Right lobe of liver (tissue), 6 donors: ENCODE measurements at regions of chr2 and their contacts with region 1.

Region 1: DNA sequence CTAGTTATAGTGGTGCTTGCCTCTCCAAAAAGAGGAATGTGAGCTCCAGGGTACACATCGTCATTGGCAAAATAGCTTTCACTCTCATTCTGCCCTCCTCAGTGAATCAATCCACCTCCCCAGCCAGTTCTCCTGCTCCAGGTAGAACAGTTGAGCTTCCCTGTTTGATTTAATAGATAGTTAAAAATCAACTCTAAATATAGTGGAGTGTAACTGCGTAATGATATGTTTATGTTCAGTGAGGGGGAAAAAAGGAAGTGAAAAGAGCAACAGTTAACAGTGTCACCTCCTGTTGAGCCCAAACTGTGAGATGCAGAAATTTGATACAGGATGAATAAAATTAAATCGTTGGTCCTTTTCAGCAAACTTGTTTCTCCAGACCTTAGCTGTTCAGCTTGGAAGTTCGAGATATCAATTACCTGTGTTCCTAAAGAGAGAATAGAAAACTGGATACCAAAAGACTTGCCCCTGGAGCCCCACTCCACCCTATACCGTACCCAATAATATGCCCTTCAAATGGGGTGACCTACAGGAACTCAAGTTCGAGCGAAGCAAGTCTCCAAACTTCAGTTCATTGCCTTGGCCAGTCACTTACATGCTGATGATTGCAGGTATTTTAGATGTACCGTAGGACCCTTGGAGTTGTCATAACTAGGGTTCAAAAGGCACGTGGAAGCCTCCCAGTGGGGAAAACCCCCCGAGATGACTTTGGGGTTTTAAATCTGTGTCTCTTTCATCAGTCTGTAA is 708.4 kb downstream of the RNF144A start:
- DNase-seq: no peak
- ATAC-seq: no peak
- H3K4me3 ChIP-seq: no peak overlapping the region
- H3K27ac ChIP-seq: no peak overlapping the region
- H3K4me1 ChIP-seq: no peaks in the 10 kb centered on the region
- H3K27me3 ChIP-seq: no peaks in the 10 kb centered on the region
- CTCF ChIP-seq: no peak
- POLR2A ChIP-seq: no peak

Region 2: DNA sequence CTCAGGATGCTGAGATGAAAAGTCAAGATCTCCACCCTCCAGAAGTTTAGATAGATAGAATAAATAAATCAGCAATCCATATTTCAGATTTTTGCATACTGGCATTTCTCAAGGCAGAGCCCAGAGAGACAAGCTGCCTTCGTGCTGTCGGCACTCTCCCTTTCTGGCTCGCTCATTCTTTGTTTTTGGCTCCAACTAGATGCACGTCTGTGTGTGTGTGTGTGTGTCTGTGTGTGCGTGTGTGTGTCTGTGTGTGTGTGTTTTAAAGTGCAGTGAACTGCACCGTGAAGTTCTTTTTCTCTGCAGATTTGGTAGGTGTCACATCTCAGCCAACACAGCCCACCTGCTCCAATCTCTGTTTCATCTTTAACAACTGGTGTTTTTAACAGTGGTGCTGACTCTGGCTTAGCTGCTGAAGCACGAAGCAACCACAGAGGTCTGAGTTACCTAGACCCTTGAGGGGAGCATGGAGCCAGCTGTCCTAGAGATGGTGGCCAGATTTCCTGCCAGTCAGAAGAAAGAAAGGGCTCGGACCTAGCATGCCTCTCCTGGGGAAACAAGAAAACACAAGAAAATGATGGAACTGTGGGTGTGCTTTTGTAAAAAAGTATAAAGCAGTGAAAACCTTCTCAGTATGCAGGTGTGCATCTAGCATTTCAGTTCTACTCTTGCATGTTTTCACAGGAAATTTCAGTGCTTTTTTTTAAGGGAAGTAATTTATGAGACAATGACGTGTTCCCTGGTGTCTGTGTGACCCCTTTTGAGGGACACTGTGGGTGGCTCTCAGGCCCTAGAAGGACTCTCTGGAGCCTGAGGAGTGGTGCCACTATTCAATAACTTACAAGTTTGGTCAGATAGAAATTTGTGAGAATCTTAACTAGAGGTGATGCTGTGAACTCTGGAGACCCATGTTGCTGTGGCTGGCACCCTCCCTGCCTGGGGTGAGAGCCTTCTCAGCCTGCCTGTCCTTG is 344.0 kb before region 1 on chr2:
- intact Hi-C with region 1: loop called in 1 of 2 experiments (anchors 10 kb)
- DNase-seq: no peak
- ATAC-seq: no peak
- H3K4me3 ChIP-seq: no peak overlapping the region
- H3K27ac ChIP-seq: no peak overlapping the region
- H3K4me1 ChIP-seq: no peaks in the 10 kb centered on the region
- H3K27me3 ChIP-seq: no peaks in the 10 kb centered on the region
- CTCF ChIP-seq: no peak
- POLR2A ChIP-seq: no peak

Region 3: GRCh38 chr2:7333189-7333765 is 292.3 kb before region 1 on chr2:
- intact Hi-C with region 1: no loop called
- DNase-seq: no peak
- ATAC-seq: no peak
- H3K4me3 ChIP-seq: no peak overlapping the region
- H3K27ac ChIP-seq: no peak overlapping the region
- H3K4me1 ChIP-seq: no peaks in the 10 kb centered on the region
- H3K27me3 ChIP-seq: no peaks in the 10 kb centered on the region
- CTCF ChIP-seq: no peak
- POLR2A ChIP-seq: no peak

Region 4: DNA sequence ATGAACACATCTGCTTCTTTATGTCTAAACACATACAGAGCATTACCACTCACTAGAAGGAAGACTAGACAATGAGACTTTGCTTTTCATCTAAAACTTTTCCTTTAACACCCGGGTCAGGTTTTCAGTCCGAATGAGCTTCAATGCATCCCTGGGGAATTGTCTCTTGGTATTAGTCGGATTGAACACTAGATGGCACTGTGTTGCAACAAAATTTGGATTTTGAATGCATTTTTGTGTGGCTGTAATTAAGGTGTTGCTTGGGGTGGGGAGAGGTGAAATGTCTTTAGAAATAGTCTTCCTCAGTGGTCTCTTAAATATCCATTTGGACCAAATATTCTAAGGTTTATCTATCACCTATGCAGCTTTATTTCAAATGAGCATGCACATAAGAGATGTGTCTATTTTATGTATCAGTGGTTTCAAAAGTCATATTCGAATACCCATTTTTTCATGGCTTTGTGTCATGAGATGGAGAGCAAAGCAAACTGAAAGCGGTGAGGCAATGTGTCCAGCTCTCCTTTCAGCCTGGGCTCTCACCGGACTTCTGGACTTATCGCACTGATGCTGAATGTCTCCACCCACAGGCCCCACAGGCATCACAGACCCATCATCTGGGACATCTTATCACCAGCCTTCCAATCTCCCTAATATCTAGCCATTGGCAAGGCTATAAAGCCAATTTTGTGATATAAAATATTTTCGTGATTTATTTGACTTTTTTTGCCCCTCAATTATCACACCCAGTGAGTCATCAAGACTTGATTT is 198.1 kb before region 1 on chr2:
- intact Hi-C with region 1: no loop called
- DNase-seq: no peak
- ATAC-seq: peak; percentile 63 to 80 (median 72)
- H3K4me3 ChIP-seq: no peak overlapping the region
- H3K27ac ChIP-seq: no peak overlapping the region
- H3K4me1 ChIP-seq: peaks cover 0 to 5% (median 0%) of the 10 kb centered on the region in 4 donors
- H3K27me3 ChIP-seq: peaks cover 0 to 4% of the 10 kb centered on the region in 2 donors
- CTCF ChIP-seq: peak; percentile 65 to 77 (median 73)
- POLR2A ChIP-seq: no peak

Region 5: GRCh38 chr2:7530001-7530400 is 95.6 kb before region 1 on chr2:
- intact Hi-C with region 1: no loop called
- DNase-seq: no peak
- ATAC-seq: no peak
- H3K4me3 ChIP-seq: no peak overlapping the region
- H3K27ac ChIP-seq: no peak overlapping the region
- H3K4me1 ChIP-seq: no peaks in the 10 kb centered on the region
- H3K27me3 ChIP-seq: no peaks in the 10 kb centered on the region
- CTCF ChIP-seq: no peak
- POLR2A ChIP-seq: no peak

Region 6: DNA sequence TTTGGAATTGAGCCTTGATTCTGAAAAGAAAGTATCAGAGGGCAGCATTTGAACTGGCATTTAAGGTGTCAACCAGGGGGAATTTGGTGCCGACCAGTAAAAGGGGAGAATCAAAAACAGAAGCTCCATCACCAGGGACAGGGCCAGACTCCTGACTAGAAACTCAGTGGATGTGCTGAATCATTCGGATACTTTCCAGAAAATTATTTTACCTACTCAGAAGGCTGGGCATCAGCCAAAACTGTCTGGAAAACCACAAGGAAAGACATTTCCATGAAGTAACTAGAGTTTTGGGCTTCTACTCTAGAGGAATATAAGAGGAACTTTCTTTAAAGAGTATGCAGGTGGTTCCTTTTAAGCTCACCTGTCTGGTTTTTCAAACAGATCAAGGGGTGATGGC is 48.3 kb after region 1 on chr2:
- intact Hi-C with region 1: no loop called
- DNase-seq: no peak
- ATAC-seq: no peak
- H3K4me3 ChIP-seq: no peak overlapping the region
- H3K27ac ChIP-seq: no peak overlapping the region
- H3K4me1 ChIP-seq: peaks cover 0 to 6% (median 0%) of the 10 kb centered on the region in 4 donors
- H3K27me3 ChIP-seq: no peaks in the 10 kb centered on the region
- CTCF ChIP-seq: no peak
- POLR2A ChIP-seq: no peak